ENCODE measurements at regions of chr12 and their contacts with region 1.

Region 1: GRCh38 chr12:20030826-20031225 is 337.5 kb upstream of the PDE3A start:
- DNase-seq: peak; percentile 61 to 73
- H3K4me3 ChIP-seq: no peak overlapping the region
- H3K4me3 Mint-ChIP-seq: no peak overlapping the region
- H3K27ac Mint-ChIP-seq: peak overlapping the region; percentile 51
- H3K4me1 ChIP-seq: peaks cover 20% of the 10 kb centered on the region
- H3K4me1 Mint-ChIP-seq: peaks cover 7% of the 10 kb centered on the region
- H3K27me3 ChIP-seq: no peaks in the 10 kb centered on the region
- H3K27me3 Mint-ChIP-seq: no peaks in the 10 kb centered on the region
- CTCF ChIP-seq: no peak

Region 2: DNA sequence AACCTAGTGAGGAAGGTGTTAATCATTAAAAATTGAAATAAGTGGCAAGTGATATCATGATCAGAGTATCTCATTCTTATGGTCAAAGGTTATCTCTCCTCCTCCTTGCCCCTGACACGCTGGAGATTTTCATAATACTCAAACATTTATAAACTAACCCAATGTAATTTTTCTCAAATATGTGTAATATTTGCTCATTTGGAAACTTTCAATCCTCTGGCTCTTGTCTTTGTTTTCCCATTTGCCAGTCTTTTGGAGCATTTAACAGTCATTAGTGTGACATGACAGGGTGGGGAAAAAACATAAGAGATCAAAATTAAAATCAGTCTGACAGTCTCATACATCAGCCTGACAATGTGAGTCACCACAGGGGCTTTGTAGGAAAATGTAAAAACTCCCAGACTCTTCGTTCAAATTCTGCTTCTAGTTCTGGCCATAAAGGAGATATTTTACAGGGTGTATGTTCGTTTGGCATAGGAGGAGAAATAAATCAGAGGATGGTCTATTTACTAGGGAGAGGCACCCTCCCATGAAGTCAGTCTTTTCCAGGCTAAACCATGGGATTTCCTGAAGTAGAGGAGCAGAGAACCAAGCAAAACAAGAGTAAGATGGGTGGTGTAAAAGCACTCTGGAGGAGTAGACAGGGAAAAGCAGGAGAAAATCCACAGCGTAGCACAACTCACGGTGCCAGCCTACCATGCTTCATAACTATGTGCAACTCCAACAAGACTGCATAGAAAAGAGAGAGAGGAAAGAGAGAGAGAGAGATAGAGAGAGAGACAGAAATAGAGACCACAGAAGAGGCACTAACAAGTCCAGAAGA is 31.6 kb before region 1 on chr12:
- CTCF ChIA-PET with region 1: no interaction called
- POLR2A ChIA-PET with region 1: no interaction called
- intact Hi-C with region 1: loop called (anchors 1 kb)
- DNase-seq: no peak
- H3K4me3 ChIP-seq: no peak overlapping the region
- H3K4me3 Mint-ChIP-seq: no peak overlapping the region
- H3K27ac Mint-ChIP-seq: no peak overlapping the region
- H3K4me1 ChIP-seq: peaks cover 34% of the 10 kb centered on the region
- H3K4me1 Mint-ChIP-seq: peaks cover 13% of the 10 kb centered on the region
- H3K27me3 ChIP-seq: no peaks in the 10 kb centered on the region
- H3K27me3 Mint-ChIP-seq: no peaks in the 10 kb centered on the region
- CTCF ChIP-seq: no peak

Region 3: DNA sequence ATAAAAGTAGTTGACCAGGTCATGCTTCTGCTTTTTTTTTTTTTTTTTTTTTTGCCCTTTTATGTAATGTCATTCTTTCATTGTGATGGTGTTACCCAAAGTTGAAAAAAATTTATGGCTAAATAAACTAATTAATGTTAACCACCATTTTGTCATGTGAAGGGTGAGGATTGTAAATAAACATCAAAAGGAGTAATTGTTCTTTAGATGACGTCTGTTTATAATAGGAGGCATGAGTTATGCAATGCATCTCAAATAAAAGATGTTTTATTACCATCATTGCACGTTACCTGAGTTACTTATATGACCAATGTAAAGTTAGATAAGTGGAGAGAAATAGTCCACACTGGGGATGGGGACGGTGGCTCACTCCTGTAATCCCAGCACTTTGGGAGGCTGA is 12.4 kb before region 1 on chr12:
- CTCF ChIA-PET with region 1: no interaction called
- POLR2A ChIA-PET with region 1: no interaction called
- intact Hi-C with region 1: loop called (anchors 1 kb)
- DNase-seq: peak in 1 of 2 experiments; percentile 41
- H3K4me3 ChIP-seq: no peak overlapping the region
- H3K4me3 Mint-ChIP-seq: no peak overlapping the region
- H3K27ac Mint-ChIP-seq: peak overlapping the region; percentile 62
- H3K4me1 ChIP-seq: peaks cover 14% of the 10 kb centered on the region
- H3K4me1 Mint-ChIP-seq: peaks cover 13% of the 10 kb centered on the region
- H3K27me3 ChIP-seq: no peaks in the 10 kb centered on the region
- H3K27me3 Mint-ChIP-seq: no peaks in the 10 kb centered on the region
- CTCF ChIP-seq: no peak

Region 4: GRCh38 chr12:20183563-20183962 is 152.7 kb after region 1 on chr12:
- CTCF ChIA-PET with region 1: no interaction called
- POLR2A ChIA-PET with region 1: no interaction called
- intact Hi-C with region 1: loop called (anchors 1 kb)
- DNase-seq: peak in 1 of 2 experiments; percentile 37
- H3K4me3 ChIP-seq: no peak overlapping the region
- H3K4me3 Mint-ChIP-seq: peak overlapping the region; percentile 23
- H3K27ac Mint-ChIP-seq: peak overlapping the region; percentile 31
- H3K4me1 ChIP-seq: peaks cover 47% of the 10 kb centered on the region
- H3K4me1 Mint-ChIP-seq: peaks cover 40% of the 10 kb centered on the region
- H3K27me3 ChIP-seq: no peaks in the 10 kb centered on the region
- H3K27me3 Mint-ChIP-seq: no peaks in the 10 kb centered on the region
- CTCF ChIP-seq: no peak

Measured in Caco-2 (cell line).